ENCODE measurements at regions of chr12 and their contacts with region 1.

Region 1: GRCh38 chr12:110431957-110432587 is 18.1 kb downstream of the ARPC3 start:
- DNase-seq: peak; percentile 66
- H3K4me3 Mint-ChIP-seq: peak overlapping the region; percentile 94
- H3K27ac Mint-ChIP-seq: no peak overlapping the region
- H3K4me1 Mint-ChIP-seq: peaks cover 7% of the 10 kb centered on the region
- H3K27me3 Mint-ChIP-seq: peaks cover 3% of the 10 kb centered on the region

Region 2: GRCh38 chr12:110100315-110100970 is 331.6 kb before region 1 on chr12:
- intact Hi-C with region 1: loop called (anchors 1 kb)
- DNase-seq: peak; percentile 89
- H3K4me3 Mint-ChIP-seq: peak overlapping the region; percentile 0
- H3K27ac Mint-ChIP-seq: peak overlapping the region; percentile 36
- H3K4me1 Mint-ChIP-seq: peaks cover 12% of the 10 kb centered on the region
- H3K27me3 Mint-ChIP-seq: no peaks in the 10 kb centered on the region

Region 3: DNA sequence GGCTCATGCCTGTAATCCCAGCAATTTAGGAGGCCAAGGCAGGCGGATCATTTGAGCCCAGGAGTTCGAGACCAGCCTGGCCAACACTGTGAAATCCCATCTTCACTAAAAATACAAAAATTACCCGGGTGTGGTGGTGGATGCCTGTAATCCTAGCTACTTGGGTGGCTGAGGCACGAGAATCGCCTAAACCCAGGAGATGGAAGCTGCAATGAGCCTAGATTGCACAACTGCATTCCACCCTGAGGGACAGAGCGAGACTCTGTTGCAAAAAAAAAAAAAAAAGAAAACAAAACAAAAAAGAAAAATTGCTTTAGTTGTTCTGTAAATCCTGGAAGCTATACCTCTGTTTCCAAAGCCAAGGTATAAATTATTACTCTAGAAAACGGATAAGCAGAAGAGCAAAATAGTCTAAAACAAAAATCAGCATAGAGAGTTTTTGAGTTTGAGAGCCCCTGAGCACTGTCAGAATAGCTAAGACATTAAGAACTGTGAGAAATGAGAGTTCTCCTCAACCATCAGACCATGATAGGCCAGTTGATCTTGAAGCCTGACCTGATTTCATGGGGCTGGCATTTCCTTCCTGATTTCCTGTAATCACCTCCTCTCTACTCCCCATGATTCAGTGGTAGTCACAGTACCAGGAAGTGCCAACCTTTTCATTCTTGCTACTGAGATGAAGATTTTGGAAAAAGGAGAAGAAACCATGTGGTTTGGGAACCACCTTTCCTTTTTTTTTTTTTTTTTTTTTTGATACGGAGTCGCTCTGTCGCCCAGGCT is 119.3 kb before region 1 on chr12:
- intact Hi-C with region 1: no loop called
- DNase-seq: no peak
- H3K4me3 Mint-ChIP-seq: peak overlapping the region; percentile 43
- H3K27ac Mint-ChIP-seq: peak overlapping the region; percentile 39
- H3K4me1 Mint-ChIP-seq: peaks cover 48% of the 10 kb centered on the region
- H3K27me3 Mint-ChIP-seq: no peaks in the 10 kb centered on the region

Region 4: DNA sequence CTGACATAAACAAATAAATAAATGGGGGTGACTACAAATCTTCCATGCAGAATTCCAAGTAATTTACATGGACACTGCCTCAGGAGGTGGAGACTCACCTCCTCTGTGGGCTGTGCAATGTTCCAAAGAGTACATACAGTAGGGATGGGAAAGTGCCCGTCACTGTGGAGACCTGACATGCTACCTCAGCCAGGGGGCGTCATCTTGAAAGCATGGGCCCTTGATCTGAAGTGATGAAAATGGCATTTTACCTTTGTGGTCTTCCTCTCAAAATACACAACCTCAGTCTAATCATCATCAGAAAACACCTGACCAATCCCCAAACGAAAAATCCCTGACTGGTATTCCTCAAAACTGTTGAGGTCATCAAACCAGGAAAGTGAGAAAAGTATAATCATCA is 77.0 kb before region 1 on chr12:
- intact Hi-C with region 1: loop called (anchors 1 kb)
- DNase-seq: peak; percentile 76
- H3K4me3 Mint-ChIP-seq: no peak overlapping the region
- H3K27ac Mint-ChIP-seq: no peak overlapping the region
- H3K4me1 Mint-ChIP-seq: peaks cover 20% of the 10 kb centered on the region
- H3K27me3 Mint-ChIP-seq: no peaks in the 10 kb centered on the region

Region 5: GRCh38 chr12:110403146-110403975 is 28.7 kb before region 1 on chr12 and contains the start of gene ANAPC7:
- intact Hi-C with region 1: loop called (anchors 1 kb)
- DNase-seq: peak; percentile 96
- H3K4me3 Mint-ChIP-seq: peak within 1 kb of the TSS; percentile 99
- H3K27ac Mint-ChIP-seq: peak within 1 kb of the TSS; percentile 98
- H3K4me1 Mint-ChIP-seq: peaks cover 15% of the 10 kb centered on the region
- H3K27me3 Mint-ChIP-seq: no peaks in the 10 kb centered on the region
- total RNA-seq, gene ANAPC7: 71.4 and 77.4 TPM in 2 replicates

Region 6: DNA sequence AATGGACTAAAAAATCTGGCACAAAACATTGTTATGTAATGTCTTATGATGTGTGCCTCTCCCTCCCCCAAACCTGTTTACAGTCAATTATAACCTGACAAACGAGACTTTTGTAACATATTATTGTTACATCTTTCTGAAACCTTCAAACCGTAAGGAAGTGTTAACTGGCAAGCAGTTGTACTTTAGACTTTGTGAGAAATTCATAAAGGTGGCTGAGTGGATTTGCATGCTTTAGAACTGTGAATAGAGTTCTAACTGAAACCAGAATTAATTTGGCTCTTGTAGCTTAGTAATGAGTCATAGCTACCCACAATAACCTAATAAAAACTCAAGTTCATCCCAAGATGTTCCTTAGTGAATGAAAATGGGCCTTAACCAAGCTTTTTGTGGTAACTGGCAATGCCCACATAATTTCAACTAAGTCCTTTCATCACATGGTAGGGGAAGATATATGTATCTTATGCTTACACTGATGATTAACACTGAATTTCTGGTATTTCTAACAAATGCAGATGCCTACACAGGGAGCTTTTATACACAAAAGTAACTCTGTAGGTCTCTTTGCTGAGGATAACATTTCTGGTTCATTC is 99.8 kb after region 1 on chr12:
- intact Hi-C with region 1: no loop called
- DNase-seq: no peak
- H3K4me3 Mint-ChIP-seq: no peak overlapping the region
- H3K27ac Mint-ChIP-seq: peak overlapping the region; percentile 70
- H3K4me1 Mint-ChIP-seq: peaks cover 27% of the 10 kb centered on the region
- H3K27me3 Mint-ChIP-seq: no peaks in the 10 kb centered on the region

Region 7: GRCh38 chr12:110670161-110670701 is 238.2 kb after region 1 on chr12:
- intact Hi-C with region 1: no loop called
- DNase-seq: peak; percentile 84
- H3K4me3 Mint-ChIP-seq: peak overlapping the region; percentile 65
- H3K27ac Mint-ChIP-seq: peak overlapping the region; percentile 90
- H3K4me1 Mint-ChIP-seq: peaks cover 39% of the 10 kb centered on the region
- H3K27me3 Mint-ChIP-seq: no peaks in the 10 kb centered on the region

Region 8: DNA sequence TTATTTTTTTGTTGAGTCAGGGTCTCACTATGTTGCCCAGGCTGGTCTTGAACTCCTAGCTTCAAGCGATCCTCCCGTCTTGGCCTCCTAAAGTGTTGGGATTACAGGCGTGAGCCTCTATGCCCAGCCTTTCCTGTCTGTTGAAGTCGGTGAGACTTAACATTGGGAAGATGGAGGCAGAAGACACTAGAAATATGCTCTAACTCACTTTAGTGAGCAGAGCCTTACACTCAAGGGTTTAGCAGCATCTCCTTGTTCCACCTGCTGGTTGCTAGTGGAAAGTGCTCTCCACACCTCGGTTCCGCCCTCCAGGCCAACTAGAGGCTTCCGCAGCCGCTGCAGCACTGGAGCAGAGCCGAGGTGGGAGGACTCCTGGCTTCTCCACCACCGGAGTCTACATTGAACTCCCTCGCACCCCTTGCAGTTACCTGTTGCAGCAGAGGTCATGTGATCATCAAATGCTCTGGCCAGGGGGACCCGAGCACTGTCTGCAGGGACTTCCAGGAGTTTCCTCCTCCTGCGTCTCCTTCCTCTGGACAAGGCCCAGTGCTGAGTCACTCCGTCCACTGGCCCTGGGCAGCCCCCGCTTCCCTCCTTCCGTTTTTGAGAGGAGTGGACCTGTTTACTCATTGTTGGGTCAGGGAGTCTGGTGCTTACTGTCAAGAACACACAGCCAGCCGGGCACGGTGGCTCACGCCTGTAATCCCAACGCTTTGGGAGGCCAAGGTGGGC is 266.3 kb after region 1 on chr12:
- intact Hi-C with region 1: no loop called
- DNase-seq: peak; percentile 95
- H3K4me3 Mint-ChIP-seq: no peak overlapping the region
- H3K27ac Mint-ChIP-seq: peak overlapping the region; percentile 88
- H3K4me1 Mint-ChIP-seq: peaks cover 12% of the 10 kb centered on the region
- H3K27me3 Mint-ChIP-seq: no peaks in the 10 kb centered on the region

Measured in activated CD4-positive, alpha-beta T cell treated with anti-CD3 and anti-CD28 coated beads, Interleukin-2, amount 10 ng/mL, durations not matched to agents 24 days and 14 days (primary cell).